Pancreas (tissue), 10 donors: ENCODE measurements at regions of chr22 and their contacts with region 1.

Region 1: GRCh38 chr22:43848366-43849171 is 13.7 kb downstream of the SULT4A1 start:
- DNase-seq: peak in 3 of 6 donors; percentile 36 to 62 (median 37)
- ATAC-seq: peak in 3 of 4 donors; percentile 77 to 90 (median 80)
- H3K4me3 ChIP-seq: no peak overlapping the region
- H3K27ac ChIP-seq: no peak overlapping the region
- H3K4me1 ChIP-seq: no peaks in the 10 kb centered on the region
- H3K27me3 ChIP-seq: no peaks in the 10 kb centered on the region
- CTCF ChIP-seq: peak in 2 of 4 donors; percentile 18 to 31

Region 2: GRCh38 chr22:43399338-43399979 is 449.1 kb before region 1 on chr22:
- intact Hi-C with region 1: loop called in 1 of 3 experiments (anchors 10 kb)
- DNase-seq: peak in 1 of 6 donors; percentile 30
- ATAC-seq: no peak
- H3K4me3 ChIP-seq: no peak overlapping the region
- H3K27ac ChIP-seq: no peak overlapping the region
- H3K4me1 ChIP-seq: no peaks in the 10 kb centered on the region
- H3K27me3 ChIP-seq: no peaks in the 10 kb centered on the region
- CTCF ChIP-seq: no peak

Region 3: GRCh38 chr22:43580351-43580750 is 268.2 kb before region 1 on chr22:
- intact Hi-C with region 1: no loop called
- DNase-seq: no peak
- ATAC-seq: no peak
- H3K4me3 ChIP-seq: no peak overlapping the region
- H3K27ac ChIP-seq: no peak overlapping the region
- H3K4me1 ChIP-seq: no peaks in the 10 kb centered on the region
- H3K27me3 ChIP-seq: no peaks in the 10 kb centered on the region
- CTCF ChIP-seq: no peak

Region 4: GRCh38 chr22:44080936-44081861 is 232.6 kb after region 1 on chr22:
- intact Hi-C with region 1: no loop called
- DNase-seq: peak in 5 of 6 donors; percentile 37 to 85 (median 63)
- ATAC-seq: peak in 3 of 4 donors; percentile 80 to 83 (median 81)
- H3K4me3 ChIP-seq: no peak overlapping the region
- H3K27ac ChIP-seq: no peak overlapping the region
- H3K4me1 ChIP-seq: no peaks in the 10 kb centered on the region
- H3K27me3 ChIP-seq: no peaks in the 10 kb centered on the region
- CTCF ChIP-seq: peak; percentile 71 to 78 (median 75)